ENCODE measurements at regions of chr3 and their contacts with region 1.

Region 1: GRCh38 chr3:114418724-114419543 is 125.1 kb downstream of the TIGIT start:
- DNase-seq: peak; percentile 73
- ATAC-seq: peak; percentile 94
- H3K4me3 ChIP-seq: no peak overlapping the region
- H3K27ac ChIP-seq: no peak overlapping the region
- H3K4me1 ChIP-seq: no peaks in the 10 kb centered on the region
- H3K27me3 ChIP-seq: no peaks in the 10 kb centered on the region
- CTCF ChIP-seq: peak; percentile 75
- EP300 ChIP-seq: no peak
- POLR2A ChIP-seq: no peak
- RAD21 ChIP-seq: no peak

Region 2: DNA sequence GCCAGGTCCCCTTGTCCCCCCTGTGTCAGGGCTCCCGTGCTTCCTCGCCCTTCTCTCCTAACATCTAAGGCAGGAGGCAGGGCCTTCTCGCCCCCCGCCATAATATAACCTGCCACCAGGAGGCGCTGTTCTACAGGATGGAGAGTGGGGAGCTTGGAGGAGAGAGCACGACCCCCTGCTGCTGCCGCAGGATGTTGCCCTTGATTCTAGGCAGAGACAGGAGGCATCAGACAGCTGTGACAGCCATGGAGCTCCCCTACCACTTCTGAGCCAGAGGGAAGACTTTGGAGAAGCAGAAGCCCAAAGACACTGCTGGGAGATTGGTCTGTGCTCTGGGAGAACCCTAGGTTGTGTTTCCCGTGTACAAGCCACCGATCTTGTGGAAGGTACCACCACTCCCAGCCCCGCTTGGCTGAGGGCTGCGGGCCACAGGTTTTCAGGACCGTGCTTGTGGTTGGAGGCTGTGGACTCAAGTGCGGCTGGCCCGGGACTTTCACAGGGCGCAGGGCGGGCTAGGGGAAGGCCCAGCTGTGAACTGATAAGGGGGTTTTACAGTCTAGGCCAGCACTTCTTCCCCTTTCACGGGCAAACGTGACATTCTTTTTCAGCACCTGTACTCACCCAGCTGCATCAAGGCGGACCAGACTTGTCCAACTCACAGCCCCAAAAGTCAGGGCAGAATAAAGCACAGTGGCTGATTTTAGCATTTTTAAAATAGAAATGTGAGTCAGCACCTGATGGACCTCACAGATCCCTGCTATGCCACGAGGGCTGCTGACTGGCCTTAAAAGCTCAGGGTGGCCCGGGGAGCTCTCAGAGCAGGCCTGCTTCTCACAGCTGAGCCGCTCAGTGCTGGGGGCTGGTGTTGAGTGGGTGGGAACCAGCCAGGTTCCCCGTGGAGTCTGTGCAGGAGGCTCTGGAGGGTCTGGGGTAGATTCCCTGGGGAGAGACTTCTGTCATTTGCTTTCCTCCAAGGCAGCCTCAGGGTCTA is 127.7 kb before region 1 on chr3:
- CTCF ChIA-PET with region 1: interaction called, 3 read pairs
- POLR2A ChIA-PET with region 1: no interaction called
- in situ Hi-C with region 1: no loop called
- intact Hi-C with region 1: loop called (anchors 1 kb)
- DNase-seq: peak; percentile 54
- ATAC-seq: peak; percentile 98
- H3K4me3 ChIP-seq: peak overlapping the region in 1 of 3 experiments; percentile 11; a peak in 1 of 6 replicates
- H3K27ac ChIP-seq: no peak overlapping the region
- H3K4me1 ChIP-seq: no peaks in the 10 kb centered on the region
- H3K27me3 ChIP-seq: peaks cover 0 to 5% of the 10 kb centered on the region in 2 experiments; a peak in 1 of 5 replicates
- CTCF ChIP-seq: peak; percentile 89
- EP300 ChIP-seq: no peak
- POLR2A ChIP-seq: no peak
- RAD21 ChIP-seq: peak; percentile 37; the same call in 1 of the 2 replicates

Region 3: GRCh38 chr3:114362815-114363214 is 56.1 kb before region 1 on chr3:
- CTCF ChIA-PET with region 1: no interaction called
- POLR2A ChIA-PET with region 1: no interaction called
- in situ Hi-C with region 1: no loop called
- intact Hi-C with region 1: loop called (anchors 10 kb)
- DNase-seq: peak; percentile 11
- ATAC-seq: peak; percentile 84
- H3K4me3 ChIP-seq: no peak overlapping the region
- H3K27ac ChIP-seq: no peak overlapping the region
- H3K4me1 ChIP-seq: 0 out of 2 replicates have a peak, but pooled peaks cover 6% of the 10 kb centered on the region
- H3K27me3 ChIP-seq: no peaks in the 10 kb centered on the region
- CTCF ChIP-seq: peak; percentile 50
- EP300 ChIP-seq: no peak
- POLR2A ChIP-seq: no peak
- RAD21 ChIP-seq: no peak

Region 4: GRCh38 chr3:114383875-114384557 is 34.9 kb before region 1 on chr3:
- CTCF ChIA-PET with region 1: interaction called, 12 read pairs
- POLR2A ChIA-PET with region 1: no interaction called
- in situ Hi-C with region 1: no loop called
- intact Hi-C with region 1: loop called (anchors 1 kb)
- DNase-seq: peak; percentile 60
- ATAC-seq: peak; percentile 99
- H3K4me3 ChIP-seq: no peak overlapping the region
- H3K27ac ChIP-seq: peak overlapping the region; percentile 23
- H3K4me1 ChIP-seq: peaks cover 5% of the 10 kb centered on the region
- H3K27me3 ChIP-seq: no peaks in the 10 kb centered on the region
- CTCF ChIP-seq: peak; percentile 87
- EP300 ChIP-seq: no peak
- POLR2A ChIP-seq: no peak
- RAD21 ChIP-seq: peak; percentile 70

Region 5: DNA sequence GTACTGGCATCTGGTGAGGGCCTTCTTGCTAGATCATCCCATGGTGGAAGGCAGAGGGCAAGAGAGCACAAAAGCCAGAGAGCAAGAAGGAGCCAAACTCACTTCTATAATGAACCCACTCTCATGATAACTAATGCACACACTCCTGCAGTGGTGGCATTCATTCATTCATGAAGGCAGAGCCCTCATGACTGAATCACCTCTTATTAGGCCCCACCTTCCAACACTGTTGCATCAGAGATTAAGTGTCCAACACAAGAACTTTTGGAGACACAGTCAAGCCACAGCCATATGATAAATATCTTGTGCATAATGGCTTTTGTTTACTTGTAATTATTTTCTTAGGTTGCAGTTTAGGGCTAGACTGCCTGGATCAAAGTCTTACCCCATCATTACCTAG is 57.6 kb after region 1 on chr3:
- CTCF ChIA-PET with region 1: no interaction called
- POLR2A ChIA-PET with region 1: no interaction called
- in situ Hi-C with region 1: no loop called
- intact Hi-C with region 1: no loop called
- DNase-seq: no peak
- ATAC-seq: no peak
- H3K4me3 ChIP-seq: no peak overlapping the region
- H3K27ac ChIP-seq: no peak overlapping the region
- H3K4me1 ChIP-seq: peaks cover 34% of the 10 kb centered on the region
- H3K27me3 ChIP-seq: no peaks in the 10 kb centered on the region
- CTCF ChIP-seq: no peak
- EP300 ChIP-seq: no peak
- POLR2A ChIP-seq: no peak
- RAD21 ChIP-seq: no peak